HCT116 (cell line): ENCODE measurements at regions of chr3 and their contacts with region 1.

Region 1: GRCh38 chr3:52056968-52057805 is 816 bp upstream of the DUSP7 start:
- DNase-seq: peak; percentile 97
- ATAC-seq: peak; percentile 84
- H3K4me3 ChIP-seq: peak overlapping the region; percentile 56 to 61
- H3K27ac ChIP-seq: peak overlapping the region; percentile 83
- H3K4me1 ChIP-seq: peaks cover 26 to 47% of the 10 kb centered on the region in 2 experiments
- H3K27me3 ChIP-seq: no peaks in the 10 kb centered on the region
- CTCF ChIP-seq: no peak
- POLR2A ChIP-seq: no peak
- RAD21 ChIP-seq: no peak

Region 2: DNA sequence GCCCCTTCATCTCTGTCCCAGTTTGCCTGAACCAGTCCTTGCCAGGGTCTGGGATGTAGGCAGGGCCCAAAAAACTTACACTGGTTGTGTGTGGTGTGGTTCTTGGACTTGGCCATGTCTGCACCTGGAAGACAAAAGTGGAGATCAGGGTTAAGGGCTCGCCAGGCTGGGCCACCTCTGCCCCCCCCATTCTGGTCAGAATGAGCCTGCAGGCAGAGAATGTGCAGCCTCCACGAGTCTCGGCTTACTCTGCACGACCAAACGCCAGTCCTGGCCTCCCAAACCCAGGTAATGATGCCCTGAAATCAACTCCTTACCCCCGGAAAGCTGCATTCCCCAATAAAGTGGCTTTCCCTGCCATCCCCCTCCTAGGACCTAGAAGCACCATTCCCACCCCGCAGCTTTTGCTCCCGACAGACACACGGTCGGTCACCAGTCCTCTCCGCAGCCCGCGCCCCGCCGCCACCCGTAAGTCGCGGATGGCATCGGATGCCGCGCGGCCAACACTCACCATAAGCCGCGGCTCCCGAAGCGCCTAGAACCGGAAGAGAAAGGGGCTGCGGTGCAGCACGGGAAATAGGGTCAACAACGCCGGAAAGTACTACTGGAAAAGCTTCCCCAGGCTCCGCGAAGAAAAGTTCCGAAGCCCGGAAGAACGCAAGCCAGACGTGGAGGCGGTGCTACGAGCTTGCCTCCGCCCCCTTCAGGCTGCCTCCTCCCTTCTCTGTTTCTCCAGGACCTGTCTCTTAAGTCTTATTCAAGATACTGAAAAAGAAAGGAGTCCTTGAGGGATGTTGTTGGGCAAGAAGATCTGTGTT is 61.6 kb before region 1 on chr3 and contains the start of gene RPL29:
- CTCF ChIA-PET with region 1: no interaction called
- POLR2A ChIA-PET with region 1: interaction called, 10 read pairs
- RAD21 ChIA-PET with region 1: interaction called in 1 of 2 experiments, 5 read pairs
- intact Hi-C with region 1: loop called (anchors 2 kb)
- DNase-seq: peak; percentile 90
- ATAC-seq: peak; percentile 72
- H3K4me3 ChIP-seq: peak within 1 kb of the TSS; percentile 82 to 100
- H3K27ac ChIP-seq: peak within 1 kb of the TSS; percentile 88
- H3K4me1 ChIP-seq: peaks cover 13 to 46% of the 10 kb centered on the region in 2 experiments
- H3K27me3 ChIP-seq: no peaks in the 10 kb centered on the region
- CTCF ChIP-seq: no peak
- POLR2A ChIP-seq: peak; percentile 92
- RAD21 ChIP-seq: no peak
- total RNA-seq, gene RPL29: 1,880 TPM

Region 3: DNA sequence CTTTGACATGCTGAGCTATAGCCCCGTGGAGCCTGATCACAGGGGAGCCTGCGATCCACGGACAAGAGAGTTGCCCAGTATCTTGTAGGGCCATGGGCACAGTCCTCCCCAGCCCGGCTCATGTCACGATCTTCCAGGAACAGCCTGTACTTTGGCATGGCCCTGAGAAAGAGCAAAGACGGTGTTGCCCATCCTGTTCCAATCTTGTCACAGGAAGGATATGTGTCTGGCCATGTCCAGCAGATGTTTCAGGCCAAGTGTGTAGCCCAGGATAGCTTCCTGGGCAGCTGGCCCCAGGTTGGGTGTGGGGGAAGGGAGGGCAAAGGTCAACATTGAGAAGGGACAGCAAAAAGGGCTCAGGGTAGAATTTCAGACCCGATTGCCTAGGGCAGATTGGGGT is 44.5 kb before region 1 on chr3:
- CTCF ChIA-PET with region 1: interaction called, 10 read pairs
- POLR2A ChIA-PET with region 1: no interaction called
- RAD21 ChIA-PET with region 1: no interaction called
- intact Hi-C with region 1: no loop called
- DNase-seq: no peak
- ATAC-seq: no peak
- H3K4me3 ChIP-seq: no peak overlapping the region
- H3K27ac ChIP-seq: no peak overlapping the region
- H3K4me1 ChIP-seq: peaks cover 0 to 6% of the 10 kb centered on the region in 2 experiments; a peak in 1 of 4 replicates
- H3K27me3 ChIP-seq: no peaks in the 10 kb centered on the region
- CTCF ChIP-seq: no peak
- POLR2A ChIP-seq: no peak
- RAD21 ChIP-seq: no peak

Region 4: GRCh38 chr3:52144034-52144795 is 87.0 kb after region 1 on chr3:
- CTCF ChIA-PET with region 1: interaction called, 7 read pairs
- POLR2A ChIA-PET with region 1: no interaction called
- RAD21 ChIA-PET with region 1: interaction called in 1 of 2 experiments, 3 read pairs
- intact Hi-C with region 1: loop called (anchors 5 kb)
- DNase-seq: peak; percentile 34
- ATAC-seq: peak; percentile 95
- H3K4me3 ChIP-seq: no peak overlapping the region
- H3K27ac ChIP-seq: no peak overlapping the region
- H3K4me1 ChIP-seq: peaks cover 0 to 4% of the 10 kb centered on the region in 2 experiments; a peak in 1 of 4 replicates
- H3K27me3 ChIP-seq: no peaks in the 10 kb centered on the region
- CTCF ChIP-seq: peak; percentile 92 to 97 (median 94)
- POLR2A ChIP-seq: no peak
- RAD21 ChIP-seq: peak; percentile 96

Region 5: DNA sequence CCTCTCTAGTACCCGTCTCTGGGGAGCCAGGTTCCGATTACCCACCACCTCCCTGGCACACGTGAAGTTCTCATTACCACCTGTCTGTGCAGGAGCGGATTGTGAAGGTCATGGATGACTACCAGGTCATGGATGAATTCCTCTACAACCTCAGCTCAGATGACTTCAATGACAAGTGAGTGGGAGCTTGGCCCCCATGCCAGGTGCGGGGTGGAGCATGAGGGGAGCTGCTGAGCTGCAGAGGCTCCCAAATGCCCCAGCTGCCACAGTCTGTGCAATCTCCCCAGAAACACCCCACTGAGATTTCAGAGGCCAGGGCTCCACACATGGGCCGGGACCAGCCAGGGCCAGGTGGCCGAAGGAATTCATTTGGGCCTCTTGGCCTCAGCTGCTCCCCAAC is 293.2 kb after region 1 on chr3:
- CTCF ChIA-PET with region 1: no interaction called
- POLR2A ChIA-PET with region 1: no interaction called
- RAD21 ChIA-PET with region 1: no interaction called
- intact Hi-C with region 1: no loop called
- DNase-seq: no peak
- ATAC-seq: no peak
- H3K4me3 ChIP-seq: no peak overlapping the region
- H3K27ac ChIP-seq: no peak overlapping the region
- H3K4me1 ChIP-seq: peaks cover 0 to 5% of the 10 kb centered on the region in 2 experiments; a peak in 1 of 4 replicates
- H3K27me3 ChIP-seq: no peaks in the 10 kb centered on the region
- CTCF ChIP-seq: no peak
- POLR2A ChIP-seq: no peak
- RAD21 ChIP-seq: no peak